Activated CD8-positive, alpha-beta T cell treated with anti-CD3 and anti-CD28 coated beads for 36 hours (primary cell): ENCODE measurements at regions of chr1 and their contacts with region 1.

Region 1: DNA sequence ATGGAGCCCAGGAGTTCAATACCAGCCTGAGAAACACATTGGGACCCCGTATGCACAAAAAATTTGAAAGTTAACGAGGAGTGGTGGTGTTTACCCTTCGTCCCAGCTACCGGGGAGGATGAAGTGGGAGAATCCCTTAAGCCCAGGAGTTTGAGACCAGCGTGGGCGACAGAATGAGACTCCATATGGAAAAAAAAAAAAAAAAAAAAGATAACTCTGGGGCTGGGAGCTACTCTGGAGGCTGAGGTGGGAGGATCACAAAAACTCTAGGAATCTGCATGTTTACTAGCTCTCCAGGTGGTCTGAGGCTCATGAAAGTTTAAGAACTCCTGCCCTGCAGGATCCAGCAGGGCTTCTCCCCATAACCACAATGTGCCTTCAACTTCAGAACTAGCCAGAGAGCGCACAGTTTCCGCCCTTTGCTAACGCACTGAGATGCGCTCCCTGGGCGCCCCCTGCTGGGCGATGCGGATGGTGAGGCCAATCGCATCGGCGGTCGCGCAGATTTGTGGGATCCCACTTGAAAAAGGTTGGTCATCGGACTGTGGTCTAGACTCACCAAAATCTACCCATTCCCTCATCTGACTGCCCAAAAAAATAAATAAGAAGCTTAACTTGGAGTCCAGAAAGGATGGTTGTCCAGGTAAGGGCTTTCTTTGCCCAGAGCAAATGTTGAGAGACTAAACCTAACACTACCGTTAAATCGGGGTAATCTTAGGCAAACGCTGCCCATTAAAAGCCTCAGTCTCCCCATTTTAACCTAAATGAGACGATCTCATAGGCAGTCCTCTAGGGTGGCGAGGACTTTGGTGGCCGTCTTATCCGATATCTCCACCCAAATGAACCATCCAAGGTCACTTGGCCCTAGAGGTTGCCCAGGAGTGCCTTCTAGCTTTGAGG is 8.8 kb downstream of the ZNF683 start:
- DNase-seq: peak; percentile 94
- ATAC-seq: peak; percentile 70
- H3K4me3 Mint-ChIP-seq: no peak overlapping the region
- H3K27ac Mint-ChIP-seq: no peak overlapping the region
- H3K4me1 Mint-ChIP-seq: peaks cover 43% of the 10 kb centered on the region
- H3K27me3 Mint-ChIP-seq: peaks cover 17% of the 10 kb centered on the region
- CTCF ChIP-seq: peak; percentile 98

Region 2: GRCh38 chr1:26378088-26378878 is 14.5 kb after region 1 on chr1:
- CTCF ChIA-PET with region 1: interaction called, 53 read pairs
- POLR2A ChIA-PET with region 1: interaction called, 13 read pairs
- intact Hi-C with region 1: no loop called
- DNase-seq: peak; percentile 91
- ATAC-seq: peak; percentile 96
- H3K4me3 Mint-ChIP-seq: peak overlapping the region; percentile 33
- H3K27ac Mint-ChIP-seq: peak overlapping the region; percentile 82
- H3K4me1 Mint-ChIP-seq: peaks cover 59% of the 10 kb centered on the region
- H3K27me3 Mint-ChIP-seq: no peaks in the 10 kb centered on the region
- CTCF ChIP-seq: no peak

Region 3: DNA sequence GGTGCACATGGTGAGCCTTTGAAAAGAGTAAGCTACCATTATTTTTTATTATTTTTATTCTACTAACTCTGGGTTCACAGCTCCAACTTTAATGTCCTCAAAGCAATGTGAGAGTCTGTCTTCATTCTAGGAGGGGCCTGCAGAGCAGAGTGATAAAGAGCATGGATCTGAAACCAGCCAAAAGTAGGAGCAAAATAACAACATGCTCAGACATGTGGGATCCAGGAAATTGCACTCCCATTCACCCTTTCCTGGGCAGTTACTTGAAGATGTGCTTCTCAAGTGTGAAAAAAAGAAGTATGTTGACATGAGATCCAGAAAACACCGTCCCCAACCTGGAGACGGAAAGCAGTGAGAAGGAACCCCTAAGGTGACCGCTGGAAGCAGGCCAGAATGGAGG is 38.1 kb after region 1 on chr1:
- CTCF ChIA-PET with region 1: interaction called, 20 read pairs
- POLR2A ChIA-PET with region 1: interaction called, 3 read pairs
- intact Hi-C with region 1: no loop called
- DNase-seq: no peak
- ATAC-seq: no peak
- H3K4me3 Mint-ChIP-seq: no peak overlapping the region
- H3K27ac Mint-ChIP-seq: no peak overlapping the region
- H3K4me1 Mint-ChIP-seq: no peaks in the 10 kb centered on the region
- H3K27me3 Mint-ChIP-seq: peaks cover 13% of the 10 kb centered on the region
- CTCF ChIP-seq: no peak

Region 4: GRCh38 chr1:26450908-26451307 is 87.1 kb after region 1 on chr1:
- CTCF ChIA-PET with region 1: no interaction called
- POLR2A ChIA-PET with region 1: no interaction called
- intact Hi-C with region 1: no loop called
- DNase-seq: no peak
- ATAC-seq: no peak
- H3K4me3 Mint-ChIP-seq: no peak overlapping the region
- H3K27ac Mint-ChIP-seq: no peak overlapping the region
- H3K4me1 Mint-ChIP-seq: no peaks in the 10 kb centered on the region
- H3K27me3 Mint-ChIP-seq: no peaks in the 10 kb centered on the region
- CTCF ChIP-seq: no peak

Region 5: GRCh38 chr1:26490158-26490557 is 126.4 kb after region 1 on chr1:
- CTCF ChIA-PET with region 1: no interaction called
- POLR2A ChIA-PET with region 1: no interaction called
- intact Hi-C with region 1: no loop called
- DNase-seq: no peak
- ATAC-seq: no peak
- H3K4me3 Mint-ChIP-seq: no peak overlapping the region
- H3K27ac Mint-ChIP-seq: no peak overlapping the region
- H3K4me1 Mint-ChIP-seq: peaks cover 2% of the 10 kb centered on the region
- H3K27me3 Mint-ChIP-seq: no peaks in the 10 kb centered on the region
- CTCF ChIP-seq: no peak